ENCODE measurements at regions of chr9 and their contacts with region 1.

Region 1: GRCh38 chr9:69971643-69972449 is 71.8 kb upstream of the MAMDC2 start:
- DNase-seq: peak; percentile 66

Region 2: GRCh38 chr9:69056191-69056815 is 915.5 kb before region 1 on chr9:
- in situ Hi-C with region 1: no loop called
- DNase-seq: no peak

Region 3: DNA sequence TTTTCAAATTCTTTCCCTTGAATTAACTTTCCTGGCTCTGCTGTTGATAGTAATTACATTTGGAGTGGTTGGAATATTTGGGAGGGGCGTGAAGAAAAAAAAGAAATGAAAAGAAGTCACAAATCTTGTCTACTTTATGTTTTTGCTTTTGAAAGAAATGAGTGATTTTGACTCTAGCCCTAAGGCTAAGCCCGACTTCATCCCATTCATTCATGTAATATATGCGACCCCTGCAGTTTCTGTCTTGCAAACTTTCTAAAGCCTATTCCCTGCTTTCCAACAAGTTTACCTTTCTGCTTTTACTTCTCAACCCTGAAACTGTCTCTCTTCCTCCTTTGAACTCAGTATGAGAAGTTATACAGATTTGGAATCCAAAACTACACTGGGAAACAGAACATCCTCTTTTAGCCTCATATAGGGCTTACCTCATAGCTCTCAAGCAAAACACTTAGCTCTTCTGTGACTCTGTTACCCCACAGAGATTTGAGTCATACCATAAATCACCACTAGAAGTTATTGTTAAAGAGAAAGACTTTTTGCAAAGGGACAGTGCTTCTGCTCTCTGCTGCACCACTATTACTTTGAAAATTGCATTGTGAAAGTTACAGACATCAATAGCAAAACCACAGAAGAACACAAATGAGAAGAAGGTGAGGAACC is 149.6 kb before region 1 on chr9:
- in situ Hi-C with region 1: no loop called
- DNase-seq: no peak

Region 4: DNA sequence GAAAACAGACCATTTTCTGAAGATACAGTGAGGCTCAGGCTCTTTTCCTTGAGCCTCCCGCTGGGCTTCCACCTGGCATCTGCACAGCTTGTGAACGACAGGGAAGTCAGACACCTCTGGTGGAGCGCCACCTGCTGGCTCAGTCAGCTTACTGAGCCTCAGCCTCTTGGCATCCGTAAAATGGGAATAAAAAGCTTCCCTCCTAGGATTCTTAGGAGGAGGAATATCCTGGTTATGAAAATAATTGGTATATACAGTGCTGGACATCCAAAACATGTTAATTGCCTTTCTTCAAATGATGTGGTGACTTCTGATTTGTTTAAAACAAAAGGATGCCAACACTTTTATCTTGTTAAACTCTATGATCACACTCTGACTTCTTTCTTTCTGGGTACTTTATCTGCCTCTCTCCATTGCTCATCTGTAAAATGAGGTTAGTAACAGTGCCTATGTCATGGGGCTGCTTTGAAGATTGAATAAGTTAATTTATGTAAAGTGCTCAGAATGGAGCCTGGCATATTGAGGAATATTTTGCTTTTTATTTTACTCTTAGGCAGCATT is 139.3 kb after region 1 on chr9:
- in situ Hi-C with region 1: loop called (anchors 25 kb)
- DNase-seq: peak; percentile 72

Region 5: GRCh38 chr9:70170151-70170790 is 198.4 kb after region 1 on chr9:
- in situ Hi-C with region 1: no loop called
- DNase-seq: no peak